Heart right ventricle (tissue), 16 donors: ENCODE measurements at regions of chr2 and their contacts with region 1.

Region 1: GRCh38 chr2:164061129-164061746 is 325.4 kb upstream of the FIGN start:
- DNase-seq: no peak
- ATAC-seq: no peak
- H3K4me3 ChIP-seq: no peak overlapping the region
- H3K27ac ChIP-seq: no peak overlapping the region
- H3K4me1 ChIP-seq: no peaks in the 10 kb centered on the region
- H3K27me3 ChIP-seq: no peaks in the 10 kb centered on the region
- CTCF ChIP-seq: peak; percentile 28 to 72 (median 61)

Region 2: GRCh38 chr2:163171786-163172531 is 889.3 kb before region 1 on chr2:
- intact Hi-C with region 1: no loop called
- DNase-seq: no peak
- ATAC-seq: no peak
- H3K4me3 ChIP-seq: no peak overlapping the region
- H3K27ac ChIP-seq: no peak overlapping the region
- H3K4me1 ChIP-seq: no peaks in the 10 kb centered on the region
- H3K27me3 ChIP-seq: peaks cover 0 to 15% (median 0%) of the 10 kb centered on the region in 7 donors
- CTCF ChIP-seq: no peak

Region 3: DNA sequence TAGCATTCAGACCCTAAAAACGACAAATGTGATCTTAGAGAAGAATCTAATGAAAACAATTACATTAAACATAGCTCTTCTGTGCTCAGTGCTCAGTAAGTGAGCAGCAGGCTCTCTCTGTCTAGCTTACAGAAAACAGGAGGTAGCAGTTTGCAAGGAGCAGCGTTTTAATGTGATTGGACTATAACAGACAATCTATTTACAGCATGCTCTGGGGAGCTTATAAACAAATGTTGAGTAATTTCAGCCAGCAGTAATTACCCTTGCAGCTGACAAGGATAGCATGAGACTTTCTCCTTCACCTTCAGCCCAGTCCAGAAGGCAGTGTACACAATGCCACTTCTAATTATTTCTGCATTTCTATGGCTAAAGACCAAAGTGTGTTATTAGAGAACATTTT is 595.8 kb before region 1 on chr2:
- intact Hi-C with region 1: loop called in 2 of 10 experiments (anchors 10 kb)
- DNase-seq: no peak
- ATAC-seq: peak; percentile 44 to 79 (median 63)
- H3K4me3 ChIP-seq: no peak overlapping the region
- H3K27ac ChIP-seq: no peak overlapping the region
- H3K4me1 ChIP-seq: peaks cover 0 to 29% (median 3%) of the 10 kb centered on the region in 9 donors
- H3K27me3 ChIP-seq: no peaks in the 10 kb centered on the region
- CTCF ChIP-seq: no peak

Region 4: GRCh38 chr2:163471947-163472346 is 589.3 kb before region 1 on chr2:
- intact Hi-C with region 1: loop called in 2 of 10 experiments (anchors 10 kb)
- DNase-seq: peak in 1 of 2 donors; percentile 13
- ATAC-seq: peak in 6 of 8 donors; percentile 44 to 75 (median 64)
- H3K4me3 ChIP-seq: no peak overlapping the region
- H3K27ac ChIP-seq: no peak overlapping the region
- H3K4me1 ChIP-seq: peaks cover 0 to 10% (median 0%) of the 10 kb centered on the region in 9 donors
- H3K27me3 ChIP-seq: no peaks in the 10 kb centered on the region
- CTCF ChIP-seq: peak in 8 of 9 donors; percentile 16 to 61 (median 46)

Region 5: DNA sequence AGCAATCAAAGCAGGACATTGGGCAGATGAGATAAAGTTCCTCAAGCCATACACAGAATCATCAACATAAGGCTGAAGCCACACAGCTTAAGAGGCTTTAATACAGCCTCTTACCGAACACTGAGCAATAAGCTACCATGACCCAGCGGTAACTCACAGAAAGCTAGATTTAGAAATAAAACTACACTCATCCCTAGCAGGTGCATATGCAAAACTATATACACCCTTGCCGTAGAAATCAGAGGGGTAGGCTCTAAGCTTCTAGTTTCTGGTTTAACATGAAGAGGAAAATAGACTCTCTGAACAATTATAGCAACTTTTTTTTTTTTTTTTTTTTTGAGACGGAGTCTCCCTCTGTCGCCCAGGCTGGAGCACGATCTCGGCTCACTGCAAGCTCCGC is 103.4 kb after region 1 on chr2:
- intact Hi-C with region 1: no loop called
- DNase-seq: no peak
- ATAC-seq: no peak
- H3K4me3 ChIP-seq: no peak overlapping the region
- H3K27ac ChIP-seq: no peak overlapping the region
- H3K4me1 ChIP-seq: no peaks in the 10 kb centered on the region
- H3K27me3 ChIP-seq: no peaks in the 10 kb centered on the region
- CTCF ChIP-seq: no peak